Activated T-helper 1 cell treated with anti-CD3 and anti-CD28 coated beads, Interleukin-12 subunit alpha, Interleukin-12 subunit beta, Interleukin-2, Interleukin-4 antibody, amounts not matched to agents 30 ng/mL and 10 ng/mL and 1 ng/mL, durations not matched to agents 14 hours and 24 hours and 36 hours (primary cell): ENCODE measurements at regions of chr7 and their contacts with region 1.

Region 1: GRCh38 chr7:130440527-130441365 is at the start of gene CEP41:
- DNase-seq: peak; percentile 90
- H3K4me3 Mint-ChIP-seq: peak within 1 kb of the TSS; percentile 97
- H3K27ac Mint-ChIP-seq: peak within 1 kb of the TSS; percentile 95
- H3K4me1 Mint-ChIP-seq: peaks cover 44% of the 10 kb centered on the region
- H3K27me3 Mint-ChIP-seq: no peaks in the 10 kb centered on the region
- total RNA-seq, gene CEP41: 17.1 and 17.8 TPM in 2 replicates

Region 2: GRCh38 chr7:130010689-130011412 is 429.9 kb before region 1 on chr7:
- intact Hi-C with region 1: no loop called
- DNase-seq: peak; percentile 76
- H3K4me3 Mint-ChIP-seq: no peak overlapping the region
- H3K27ac Mint-ChIP-seq: peak overlapping the region; percentile 75
- H3K4me1 Mint-ChIP-seq: peaks cover 5% of the 10 kb centered on the region
- H3K27me3 Mint-ChIP-seq: no peaks in the 10 kb centered on the region

Region 3: GRCh38 chr7:130205084-130205947 is 235.4 kb before region 1 on chr7 and contains the start of gene TMEM209:
- intact Hi-C with region 1: loop called (anchors 1 kb)
- DNase-seq: peak; percentile 93
- H3K4me3 Mint-ChIP-seq: peak within 1 kb of the TSS; percentile 95
- H3K27ac Mint-ChIP-seq: peak within 1 kb of the TSS; percentile 97
- H3K4me1 Mint-ChIP-seq: peaks cover 32% of the 10 kb centered on the region
- H3K27me3 Mint-ChIP-seq: no peaks in the 10 kb centered on the region
- total RNA-seq, gene TMEM209: 47.4 and 55.0 TPM in 2 replicates

Region 4: DNA sequence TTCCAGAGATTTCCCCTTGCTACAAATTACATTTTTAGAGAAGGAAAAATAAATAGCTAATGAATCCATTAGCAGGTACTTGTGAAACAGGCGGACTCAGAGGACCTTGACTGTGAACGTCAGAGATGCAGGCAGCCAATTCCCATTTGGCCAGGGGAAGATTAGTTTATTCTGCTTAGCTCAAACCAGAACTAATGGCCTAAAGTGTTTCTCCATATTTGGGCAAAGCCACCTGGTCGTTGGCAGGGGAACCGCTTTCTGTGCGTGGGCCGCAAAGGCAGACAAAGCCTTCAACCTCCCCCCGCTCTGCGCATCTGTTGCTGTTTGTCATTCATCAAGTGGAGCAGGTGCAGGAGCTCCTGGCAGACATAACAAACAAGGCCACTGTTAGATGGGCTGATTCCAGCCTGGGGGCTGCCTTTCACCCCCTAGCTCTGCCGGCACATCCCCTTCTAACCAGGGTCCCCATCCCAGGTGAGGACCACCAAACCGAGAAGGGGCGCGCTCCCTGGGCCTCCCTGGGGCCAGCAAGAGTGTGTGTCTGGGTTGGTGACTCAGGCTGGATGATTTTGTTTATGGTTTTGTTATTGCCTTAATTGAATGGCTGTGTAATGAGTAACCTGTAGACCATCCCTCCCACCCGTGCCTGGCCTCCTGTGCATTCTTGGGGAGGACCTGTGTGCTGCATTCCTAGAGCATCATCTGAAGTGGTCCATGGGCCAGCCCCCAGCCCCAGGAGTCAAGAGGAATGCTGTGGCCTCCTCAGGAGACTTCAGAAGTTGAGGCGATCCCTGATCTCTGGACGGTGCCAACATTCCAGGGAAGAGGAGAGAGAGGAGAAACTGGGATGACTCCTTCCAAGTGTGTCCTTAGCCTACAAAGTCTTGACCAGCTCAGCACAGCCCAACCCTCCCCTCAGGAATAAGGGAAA is 75.0 kb before region 1 on chr7:
- intact Hi-C with region 1: loop called (anchors 5 kb)
- DNase-seq: no peak
- H3K4me3 Mint-ChIP-seq: no peak overlapping the region
- H3K27ac Mint-ChIP-seq: no peak overlapping the region
- H3K4me1 Mint-ChIP-seq: peaks cover 33% of the 10 kb centered on the region
- H3K27me3 Mint-ChIP-seq: no peaks in the 10 kb centered on the region

Region 5: GRCh38 chr7:130486114-130486958 is 45.6 kb after region 1 on chr7:
- intact Hi-C with region 1: loop called (anchors 5 kb)
- DNase-seq: no peak
- H3K4me3 Mint-ChIP-seq: peak overlapping the region; percentile 78
- H3K27ac Mint-ChIP-seq: no peak overlapping the region
- H3K4me1 Mint-ChIP-seq: peaks cover 21% of the 10 kb centered on the region
- H3K27me3 Mint-ChIP-seq: peaks cover 41% of the 10 kb centered on the region